Activated T-helper 1 cell treated with anti-CD3 and anti-CD28 coated beads, Interleukin-12 subunit alpha, Interleukin-12 subunit beta, Interleukin-2, Interleukin-4 antibody, amounts not matched to agents 30 ng/mL and 10 ng/mL and 1 ng/mL, durations not matched to agents 14 hours and 24 hours and 36 hours (primary cell): ENCODE measurements at regions of chr12 and their contacts with region 1.

Region 1: GRCh38 chr12:12032851-12033588 is 37.7 kb upstream of the BCL2L14 start:
- DNase-seq: peak; percentile 57
- H3K4me3 Mint-ChIP-seq: peak overlapping the region; percentile 83
- H3K27ac Mint-ChIP-seq: peak overlapping the region; percentile 97
- H3K4me1 Mint-ChIP-seq: peaks cover 74% of the 10 kb centered on the region
- H3K27me3 Mint-ChIP-seq: no peaks in the 10 kb centered on the region

Region 2: GRCh38 chr12:10600988-10601387 is 1432.0 kb before region 1 on chr12:
- intact Hi-C with region 1: no loop called
- DNase-seq: no peak
- H3K4me3 Mint-ChIP-seq: no peak overlapping the region
- H3K27ac Mint-ChIP-seq: no peak overlapping the region
- H3K4me1 Mint-ChIP-seq: peaks cover 31% of the 10 kb centered on the region
- H3K27me3 Mint-ChIP-seq: no peaks in the 10 kb centered on the region

Region 3: GRCh38 chr12:11553871-11554533 is 479.0 kb before region 1 on chr12:
- intact Hi-C with region 1: loop called (anchors 1 kb)
- DNase-seq: peak; percentile 33
- H3K4me3 Mint-ChIP-seq: peak overlapping the region; percentile 45
- H3K27ac Mint-ChIP-seq: no peak overlapping the region
- H3K4me1 Mint-ChIP-seq: peaks cover 27% of the 10 kb centered on the region
- H3K27me3 Mint-ChIP-seq: peaks cover 8% of the 10 kb centered on the region

Region 4: DNA sequence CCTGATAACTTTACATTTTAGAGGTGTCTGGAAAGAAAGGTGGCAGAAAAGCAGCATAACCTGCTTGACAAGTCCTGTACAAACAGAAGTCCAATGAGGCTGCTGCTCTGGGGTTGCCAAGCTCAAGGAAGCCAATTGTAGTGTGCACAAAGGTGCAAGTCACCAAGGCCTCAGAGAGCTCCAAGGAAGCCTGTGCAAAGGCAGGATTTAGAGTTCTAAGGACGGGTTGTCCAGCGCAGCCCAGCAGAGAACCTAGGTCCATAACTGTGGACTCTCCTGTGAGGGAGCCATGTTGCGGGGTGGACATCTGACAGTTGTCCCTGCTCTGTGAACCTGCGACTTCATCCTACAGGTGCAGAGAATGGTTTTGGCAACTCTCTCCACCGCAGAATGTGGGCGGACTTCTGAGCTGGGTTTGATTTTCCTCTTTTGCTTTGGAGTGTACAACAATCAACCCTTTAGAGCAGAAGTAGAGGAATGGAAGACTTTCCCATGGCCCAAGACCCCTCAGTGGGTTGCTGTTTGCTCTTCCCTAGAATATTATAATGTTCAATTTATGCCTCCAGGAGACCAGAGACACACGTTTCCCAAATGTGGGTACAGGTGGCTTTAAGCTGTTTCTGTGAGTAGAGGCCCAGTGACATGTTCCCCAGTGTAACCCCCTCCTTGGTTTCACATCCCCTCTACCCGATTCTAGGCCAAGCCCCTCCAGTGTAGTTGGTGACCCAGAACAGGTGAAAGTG is 302.6 kb before region 1 on chr12:
- intact Hi-C with region 1: loop called (anchors 2 kb)
- DNase-seq: no peak
- H3K4me3 Mint-ChIP-seq: peak overlapping the region; percentile 66
- H3K27ac Mint-ChIP-seq: peak overlapping the region; percentile 86
- H3K4me1 Mint-ChIP-seq: peaks cover 93% of the 10 kb centered on the region
- H3K27me3 Mint-ChIP-seq: no peaks in the 10 kb centered on the region

Region 5: GRCh38 chr12:11812586-11813427 is 220.2 kb before region 1 on chr12:
- intact Hi-C with region 1: loop called (anchors 2 kb)
- DNase-seq: no peak
- H3K4me3 Mint-ChIP-seq: peak overlapping the region; percentile 69
- H3K27ac Mint-ChIP-seq: peak overlapping the region; percentile 91
- H3K4me1 Mint-ChIP-seq: peaks cover 87% of the 10 kb centered on the region
- H3K27me3 Mint-ChIP-seq: no peaks in the 10 kb centered on the region

Region 6: GRCh38 chr12:11958221-11959091 is 74.6 kb before region 1 on chr12:
- intact Hi-C with region 1: loop called (anchors 1 kb)
- DNase-seq: peak; percentile 55
- H3K4me3 Mint-ChIP-seq: peak overlapping the region; percentile 29
- H3K27ac Mint-ChIP-seq: peak overlapping the region; percentile 89
- H3K4me1 Mint-ChIP-seq: peaks cover 76% of the 10 kb centered on the region
- H3K27me3 Mint-ChIP-seq: no peaks in the 10 kb centered on the region

Region 7: DNA sequence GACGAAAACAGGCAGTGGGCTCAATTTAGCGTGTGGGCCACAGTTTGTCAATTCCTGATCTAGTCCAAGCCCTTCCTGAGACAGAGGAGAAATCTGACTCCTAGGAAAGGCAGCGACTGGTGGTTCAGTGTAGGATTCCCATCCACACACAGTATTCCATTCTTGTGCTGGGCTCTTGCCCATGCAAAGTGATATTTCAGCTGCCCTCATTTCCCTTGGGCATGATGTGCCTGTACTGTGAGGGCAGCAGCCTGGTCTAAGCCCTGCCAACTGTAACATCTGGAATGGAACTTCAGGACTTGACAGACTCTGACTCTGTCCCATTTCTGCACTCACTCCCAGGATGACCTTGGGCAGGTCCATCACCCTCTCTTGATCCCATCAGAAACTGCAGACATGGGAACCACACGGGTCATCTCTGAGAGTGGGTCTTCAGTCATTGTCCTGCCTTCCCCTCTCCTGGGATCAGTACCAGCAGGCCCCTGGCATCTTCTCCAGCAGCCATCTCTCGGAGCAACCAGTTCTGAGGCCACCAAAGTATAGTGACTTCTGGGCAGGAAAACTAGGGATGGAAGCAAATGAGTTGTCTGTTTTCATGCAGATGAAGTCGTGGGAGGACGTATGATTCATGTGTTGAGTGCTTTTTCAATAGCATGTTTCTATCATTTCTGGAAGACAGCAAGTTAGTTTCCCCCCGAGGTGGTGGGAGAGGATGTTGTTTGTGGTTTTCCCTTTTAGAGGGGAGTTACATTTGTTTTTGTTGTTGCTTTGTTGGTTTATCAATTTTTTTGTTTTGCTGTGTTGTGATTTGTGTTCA is 16.5 kb before region 1 on chr12:
- intact Hi-C with region 1: loop called (anchors 1 kb)
- DNase-seq: no peak
- H3K4me3 Mint-ChIP-seq: peak overlapping the region; percentile 53
- H3K27ac Mint-ChIP-seq: peak overlapping the region; percentile 98
- H3K4me1 Mint-ChIP-seq: peaks cover 86% of the 10 kb centered on the region
- H3K27me3 Mint-ChIP-seq: no peaks in the 10 kb centered on the region